ENCODE measurements at regions of chr5 and their contacts with region 1.

Region 1: GRCh38 chr5:671459-672328 is 21.5 kb downstream of the TPPP start:
- DNase-seq: peak; percentile 89
- H3K4me3 Mint-ChIP-seq: no peak overlapping the region
- H3K27ac Mint-ChIP-seq: no peak overlapping the region
- H3K4me1 Mint-ChIP-seq: peaks cover 3% of the 10 kb centered on the region
- H3K27me3 Mint-ChIP-seq: peaks cover 5% of the 10 kb centered on the region

Region 2: GRCh38 chr5:902129-902916 is 230.6 kb after region 1 on chr5:
- intact Hi-C with region 1: loop called (anchors 2 kb)
- DNase-seq: no peak
- H3K4me3 Mint-ChIP-seq: no peak overlapping the region
- H3K27ac Mint-ChIP-seq: no peak overlapping the region
- H3K4me1 Mint-ChIP-seq: peaks cover 3% of the 10 kb centered on the region
- H3K27me3 Mint-ChIP-seq: no peaks in the 10 kb centered on the region